Activated naive CD4-positive, alpha-beta T cell treated with anti-CD3 and anti-CD28 coated beads for 36 hours (primary cell): ENCODE measurements at regions of chrX and their contacts with region 1.

Region 1: DNA sequence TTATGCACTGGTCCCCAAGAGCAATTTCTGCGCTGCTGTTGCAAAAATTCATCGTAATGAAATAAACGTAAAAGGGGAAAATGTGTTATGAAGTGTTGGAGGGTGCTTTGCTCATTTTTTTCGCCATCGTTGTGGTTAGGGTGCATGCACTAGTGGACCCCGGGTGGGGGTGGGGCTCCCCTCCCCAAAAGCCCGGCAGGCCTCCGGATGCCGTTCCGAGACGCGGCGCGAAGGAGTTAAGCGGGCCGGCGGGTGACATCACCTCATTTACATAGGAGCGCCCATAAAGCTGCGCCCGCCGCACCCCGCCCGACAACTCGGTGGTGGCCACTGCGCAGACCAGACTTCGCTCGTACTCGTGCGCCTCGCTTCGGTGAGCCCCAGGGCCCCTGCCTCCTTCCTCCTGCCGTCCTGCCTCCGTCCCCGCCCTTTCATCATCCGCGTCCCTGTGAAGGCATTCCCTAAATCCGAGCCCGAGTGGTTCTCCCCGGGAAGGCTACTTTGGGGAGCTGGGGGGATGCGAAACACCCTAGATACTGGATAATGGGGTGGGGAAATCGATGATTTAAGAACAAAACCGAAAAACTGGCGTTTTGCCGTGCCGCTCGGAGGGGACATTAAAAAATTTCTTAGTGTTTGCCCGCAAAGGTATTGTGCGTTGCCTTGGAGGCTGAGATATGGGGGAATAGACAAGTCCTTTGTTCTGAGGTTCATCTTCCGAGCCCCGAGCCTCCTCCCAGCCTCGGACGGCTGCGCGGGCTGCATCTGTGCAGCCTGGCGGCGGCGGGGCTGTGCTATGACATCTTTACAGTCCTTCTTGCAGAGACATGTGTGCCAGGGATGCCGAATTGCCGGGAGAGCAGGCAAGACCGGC is at the start of gene TMSB4X:
- DNase-seq: peak; percentile 84
- H3K4me3 Mint-ChIP-seq: peak within 1 kb of the TSS; percentile 82
- H3K27ac Mint-ChIP-seq: peak within 1 kb of the TSS; percentile 96
- H3K4me1 Mint-ChIP-seq: peaks cover 18% of the 10 kb centered on the region
- H3K27me3 Mint-ChIP-seq: no peaks in the 10 kb centered on the region
- total RNA-seq, gene TMSB4X: 5,535 to 5,691 TPM

Region 2: DNA sequence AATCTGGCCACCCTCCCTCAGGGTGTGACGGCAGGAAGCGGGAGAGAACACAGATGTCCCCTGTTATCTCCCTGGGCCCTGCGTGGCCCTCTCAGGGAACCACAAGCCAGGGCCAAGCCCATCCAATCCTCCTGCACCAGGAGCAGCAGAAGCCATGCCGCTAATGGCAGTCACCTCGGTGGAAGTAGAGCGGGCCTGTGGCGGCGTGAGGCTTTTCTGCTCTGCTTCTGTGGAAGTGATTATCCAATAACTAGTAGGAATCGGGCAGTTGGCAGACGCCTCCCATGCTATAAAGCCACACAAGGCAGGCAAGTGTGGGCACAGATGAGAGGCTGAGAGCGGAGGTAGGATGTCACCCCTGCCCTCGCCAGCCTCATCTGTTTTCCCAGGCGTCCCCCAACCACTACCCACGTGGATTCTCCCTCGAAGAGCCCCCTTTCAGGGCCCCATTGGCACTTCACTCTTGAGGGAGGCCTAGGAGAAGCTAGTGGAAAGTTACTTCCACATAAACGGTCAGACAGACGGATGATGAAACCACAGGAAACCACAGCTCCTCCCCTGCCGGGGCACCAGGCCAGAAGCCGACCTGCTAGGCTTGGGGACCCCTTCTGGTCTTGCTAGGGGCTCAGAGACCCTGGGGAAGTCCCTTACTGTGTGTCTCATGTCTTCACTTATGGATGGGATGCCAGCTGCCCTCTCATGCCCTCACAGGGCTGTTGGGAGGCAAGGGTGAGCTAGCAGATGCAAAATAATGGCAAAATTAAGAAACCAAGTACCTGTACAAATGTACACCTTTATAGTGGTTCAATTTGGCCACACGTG is 18.9 kb before region 1 on chrX:
- CTCF ChIA-PET with region 1: interaction called, 125 read pairs
- intact Hi-C with region 1: loop called (anchors 1 kb)
- DNase-seq: peak; percentile 81
- H3K4me3 Mint-ChIP-seq: peak overlapping the region; percentile 83
- H3K27ac Mint-ChIP-seq: peak overlapping the region; percentile 98
- H3K4me1 Mint-ChIP-seq: peaks cover 68% of the 10 kb centered on the region
- H3K27me3 Mint-ChIP-seq: no peaks in the 10 kb centered on the region

Region 3: GRCh38 chrX:13029341-13029740 is 54.3 kb after region 1 on chrX:
- CTCF ChIA-PET with region 1: no interaction called
- intact Hi-C with region 1: no loop called
- DNase-seq: peak; percentile 28
- H3K4me3 Mint-ChIP-seq: peak overlapping the region; percentile 51
- H3K27ac Mint-ChIP-seq: peak overlapping the region; percentile 77
- H3K4me1 Mint-ChIP-seq: peaks cover 70% of the 10 kb centered on the region
- H3K27me3 Mint-ChIP-seq: no peaks in the 10 kb centered on the region

Region 4: DNA sequence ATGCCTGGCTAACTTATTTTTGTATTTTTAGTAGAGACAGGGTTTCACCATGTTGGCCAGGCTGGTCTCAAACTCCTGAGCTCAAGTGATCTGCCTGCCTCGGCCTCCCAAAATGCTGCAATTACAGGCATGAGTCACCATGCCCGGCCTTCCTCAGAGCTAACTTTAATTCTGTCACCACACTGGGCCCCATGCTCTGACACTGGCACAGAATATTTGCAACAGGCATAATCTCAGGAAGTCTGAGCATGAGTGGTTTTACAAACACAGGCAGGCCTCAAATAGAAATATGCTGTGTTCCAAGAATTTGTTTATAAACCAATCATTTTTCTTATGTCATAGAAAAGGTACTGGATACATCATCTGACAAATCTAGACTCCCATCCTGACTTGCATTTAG is 102.1 kb after region 1 on chrX:
- CTCF ChIA-PET with region 1: no interaction called
- intact Hi-C with region 1: loop called (anchors 2 kb)
- DNase-seq: peak; percentile 69
- H3K4me3 Mint-ChIP-seq: no peak overlapping the region
- H3K27ac Mint-ChIP-seq: peak overlapping the region; percentile 80
- H3K4me1 Mint-ChIP-seq: peaks cover 72% of the 10 kb centered on the region
- H3K27me3 Mint-ChIP-seq: no peaks in the 10 kb centered on the region

Region 5: GRCh38 chrX:13487731-13488523 is 512.9 kb after region 1 on chrX:
- CTCF ChIA-PET with region 1: interaction called, 3 read pairs
- intact Hi-C with region 1: loop called (anchors 1 kb)
- DNase-seq: peak; percentile 58
- H3K4me3 Mint-ChIP-seq: no peak overlapping the region
- H3K27ac Mint-ChIP-seq: peak overlapping the region; percentile 68
- H3K4me1 Mint-ChIP-seq: peaks cover 16% of the 10 kb centered on the region
- H3K27me3 Mint-ChIP-seq: no peaks in the 10 kb centered on the region

Region 6: DNA sequence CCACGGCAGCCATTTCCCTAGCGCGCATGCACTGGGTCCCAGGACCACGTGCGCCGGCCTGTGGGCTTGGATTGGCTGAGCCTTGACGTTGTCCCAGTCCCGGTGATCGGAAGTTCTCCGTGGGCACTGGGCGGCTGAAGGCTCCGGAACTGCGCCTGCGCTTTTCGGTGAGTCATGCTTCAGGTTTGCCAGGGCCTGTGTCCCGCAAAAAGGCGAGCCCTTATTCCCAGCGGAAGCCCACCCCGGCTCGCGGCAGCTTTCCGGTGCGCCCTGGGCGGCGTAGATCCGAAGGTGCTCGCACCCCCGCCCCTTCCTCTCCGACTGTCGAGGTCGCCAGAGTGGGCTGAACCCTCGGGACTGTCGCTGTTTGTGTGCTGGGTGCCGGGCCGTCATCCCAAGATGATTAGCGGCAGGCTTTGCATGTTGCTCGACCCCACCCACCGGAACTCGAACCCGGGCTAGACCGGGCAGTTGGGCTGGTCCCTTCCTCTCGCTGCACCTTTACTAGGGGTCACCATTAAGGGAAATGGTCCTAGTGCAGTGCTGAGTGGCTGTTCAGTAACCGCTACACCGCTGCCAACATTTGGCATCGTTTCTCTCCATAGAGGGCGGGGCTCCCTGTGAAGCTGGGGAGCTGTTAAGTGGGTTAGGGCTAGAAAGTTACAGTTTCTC is 678.1 kb after region 1 on chrX and contains the start of gene TCEANC:
- CTCF ChIA-PET with region 1: no interaction called
- intact Hi-C with region 1: loop called (anchors 5 kb)
- DNase-seq: peak; percentile 95
- H3K4me3 Mint-ChIP-seq: peak within 1 kb of the TSS; percentile 88
- H3K27ac Mint-ChIP-seq: peak within 1 kb of the TSS; percentile 93
- H3K4me1 Mint-ChIP-seq: peaks cover 24% of the 10 kb centered on the region
- H3K27me3 Mint-ChIP-seq: no peaks in the 10 kb centered on the region
- total RNA-seq, gene TCEANC: 2.5 to 2.7 TPM